Activated T-helper 1 cell treated with anti-CD3 and anti-CD28 coated beads, Interleukin-12 subunit alpha, Interleukin-12 subunit beta, Interleukin-2, Interleukin-4 antibody, amounts not matched to agents 30 ng/mL and 10 ng/mL and 1 ng/mL, durations not matched to agents 14 hours and 24 hours and 36 hours (primary cell): ENCODE measurements at regions of chr7 and their contacts with region 1.

Region 1: GRCh38 chr7:111004310-111004901 is 86.5 kb upstream of the LRRN3 start:
- DNase-seq: no peak
- H3K4me3 Mint-ChIP-seq: no peak overlapping the region
- H3K27ac Mint-ChIP-seq: no peak overlapping the region
- H3K4me1 Mint-ChIP-seq: peaks cover 10% of the 10 kb centered on the region
- H3K27me3 Mint-ChIP-seq: no peaks in the 10 kb centered on the region

Region 2: DNA sequence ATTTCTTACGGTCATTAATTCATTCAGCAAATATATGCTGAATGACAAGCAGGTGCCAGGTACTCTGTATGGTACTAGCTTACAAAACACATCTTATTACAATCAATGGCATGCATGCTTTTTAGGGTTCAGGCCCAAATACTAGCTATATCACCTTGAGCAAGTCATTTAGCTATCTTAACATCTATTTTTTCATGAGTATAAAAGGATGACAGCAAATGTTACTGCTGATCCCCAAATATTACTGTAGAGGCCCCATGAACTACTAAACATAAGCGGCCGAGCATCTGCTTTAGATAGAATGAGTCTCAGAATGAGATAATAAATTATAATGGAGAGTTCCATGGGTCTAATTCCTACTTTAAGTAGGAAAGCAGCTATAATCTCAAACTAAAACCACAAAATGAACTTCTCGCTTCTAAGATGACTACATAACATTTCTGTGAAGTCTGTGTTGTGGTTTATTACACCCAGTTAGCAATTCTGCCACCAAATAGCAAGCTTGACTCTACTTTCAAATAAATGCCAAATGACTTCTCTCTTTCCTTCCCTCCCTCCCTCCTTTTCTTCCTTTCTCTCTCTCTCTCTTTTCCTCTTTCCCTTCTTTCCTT is 27.2 kb before region 1 on chr7:
- intact Hi-C with region 1: no loop called
- DNase-seq: no peak
- H3K4me3 Mint-ChIP-seq: peak overlapping the region; percentile 75
- H3K27ac Mint-ChIP-seq: peak overlapping the region; percentile 79
- H3K4me1 Mint-ChIP-seq: peaks cover 41% of the 10 kb centered on the region
- H3K27me3 Mint-ChIP-seq: no peaks in the 10 kb centered on the region

Region 3: DNA sequence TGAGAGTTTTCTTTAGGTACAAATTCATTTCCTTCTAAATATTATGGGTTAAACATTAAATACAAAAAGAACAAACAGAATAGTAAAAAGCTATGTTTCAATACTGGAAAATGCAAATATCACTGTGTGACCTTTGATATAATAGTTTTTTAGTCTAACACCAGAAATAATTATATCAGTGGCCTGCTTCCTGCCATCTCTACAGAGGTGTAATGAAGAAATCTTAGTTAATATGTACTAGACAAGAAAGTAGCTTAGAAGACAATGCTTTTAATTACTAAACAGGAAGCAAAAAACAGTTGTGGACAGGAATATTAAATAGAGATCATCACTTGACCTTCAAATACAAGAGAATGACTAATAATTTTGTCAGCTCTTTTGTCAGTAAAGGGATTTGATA is 39.1 kb after region 1 on chr7:
- intact Hi-C with region 1: loop called (anchors 5 kb)
- DNase-seq: no peak
- H3K4me3 Mint-ChIP-seq: no peak overlapping the region
- H3K27ac Mint-ChIP-seq: no peak overlapping the region
- H3K4me1 Mint-ChIP-seq: peaks cover 14% of the 10 kb centered on the region
- H3K27me3 Mint-ChIP-seq: no peaks in the 10 kb centered on the region